ENCODE measurements at regions of chr3 and their contacts with region 1.

Region 1: GRCh38 chr3:192802957-192803899 is 75.9 kb upstream of the FGF12 start:
- DNase-seq: peak in 2 of 4 experiments; percentile 31 to 34
- ATAC-seq: peak; percentile 71
- H3K4me3 ChIP-seq: no peak overlapping the region
- H3K27ac ChIP-seq: no peak overlapping the region
- H3K4me1 ChIP-seq: no peaks in the 10 kb centered on the region
- H3K27me3 ChIP-seq: no peaks in the 10 kb centered on the region
- CTCF ChIP-seq: peak; percentile 12 to 53 (median 48); a peak in 3 of 6 replicates
- EP300 ChIP-seq: no peak
- POLR2A ChIP-seq: no peak
- RAD21 ChIP-seq: peak; percentile 42 to 64; a peak in 3 of 4 replicates

Region 2: DNA sequence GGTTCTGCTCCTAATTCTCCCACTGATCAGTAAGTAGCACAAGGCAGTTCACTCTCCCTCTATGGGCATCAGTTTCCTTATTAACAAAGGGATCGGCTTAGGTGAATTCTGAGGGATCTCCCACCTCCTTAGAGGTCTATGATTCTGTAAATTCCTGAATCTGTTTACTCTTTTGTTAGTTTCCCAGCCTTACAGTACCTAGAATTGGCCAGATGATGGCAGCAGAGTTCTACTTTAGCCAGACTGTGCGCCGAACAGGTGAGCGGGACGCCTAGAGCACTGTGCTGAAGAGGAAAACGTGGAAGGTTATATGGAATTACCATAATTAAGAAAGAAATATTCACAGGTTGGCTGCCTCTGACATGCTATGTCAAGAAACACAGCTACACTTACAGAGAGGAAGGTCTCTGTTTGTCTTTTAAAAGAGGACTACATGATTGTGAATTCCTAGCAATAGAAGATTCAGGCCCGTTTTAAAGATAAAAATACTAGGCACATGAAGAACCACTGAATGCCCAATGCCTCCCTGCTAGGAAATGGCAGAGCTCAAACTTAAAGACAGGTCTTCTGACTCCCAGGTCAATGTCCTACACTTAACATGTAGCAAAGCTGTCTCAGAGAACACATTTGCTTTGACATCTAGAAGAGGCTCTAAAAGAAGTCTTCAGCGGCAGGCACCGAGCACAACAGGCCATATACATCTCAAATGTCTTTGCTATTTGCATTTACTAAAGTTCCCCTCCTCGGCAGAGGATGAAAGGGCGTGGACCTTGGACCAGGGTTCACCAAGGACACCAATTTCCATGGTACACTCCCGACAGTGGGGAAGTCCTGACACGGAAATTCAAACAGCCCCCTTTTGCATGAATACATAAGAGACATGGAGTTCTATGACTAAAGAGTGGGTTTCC is 335.7 kb before region 1 on chr3:
- CTCF ChIA-PET with region 1: interaction called, 8 read pairs
- POLR2A ChIA-PET with region 1: no interaction called
- in situ Hi-C with region 1: no loop called
- intact Hi-C with region 1: loop called (anchors 1 kb)
- DNase-seq: peak; percentile 48 to 65 (median 60)
- ATAC-seq: peak; percentile 93
- H3K4me3 ChIP-seq: no peak overlapping the region
- H3K27ac ChIP-seq: no peak overlapping the region
- H3K4me1 ChIP-seq: no peaks in the 10 kb centered on the region
- H3K27me3 ChIP-seq: no peaks in the 10 kb centered on the region
- CTCF ChIP-seq: peak; percentile 59 to 83 (median 78)
- EP300 ChIP-seq: no peak
- POLR2A ChIP-seq: no peak
- RAD21 ChIP-seq: peak; percentile 67 to 75

Region 3: GRCh38 chr3:192566706-192567290 is 236.4 kb before region 1 on chr3:
- CTCF ChIA-PET with region 1: interaction called, 6 read pairs
- POLR2A ChIA-PET with region 1: no interaction called
- in situ Hi-C with region 1: loop called (anchors 10 kb)
- intact Hi-C with region 1: loop called (anchors 1 kb)
- DNase-seq: peak; percentile 38 to 65 (median 53)
- ATAC-seq: peak; percentile 88
- H3K4me3 ChIP-seq: no peak overlapping the region
- H3K27ac ChIP-seq: no peak overlapping the region
- H3K4me1 ChIP-seq: no peaks in the 10 kb centered on the region
- H3K27me3 ChIP-seq: no peaks in the 10 kb centered on the region
- CTCF ChIP-seq: peak; percentile 37 to 80 (median 79); a peak in 5 of 6 replicates
- EP300 ChIP-seq: no peak
- POLR2A ChIP-seq: no peak
- RAD21 ChIP-seq: peak; percentile 75 to 90

Region 4: DNA sequence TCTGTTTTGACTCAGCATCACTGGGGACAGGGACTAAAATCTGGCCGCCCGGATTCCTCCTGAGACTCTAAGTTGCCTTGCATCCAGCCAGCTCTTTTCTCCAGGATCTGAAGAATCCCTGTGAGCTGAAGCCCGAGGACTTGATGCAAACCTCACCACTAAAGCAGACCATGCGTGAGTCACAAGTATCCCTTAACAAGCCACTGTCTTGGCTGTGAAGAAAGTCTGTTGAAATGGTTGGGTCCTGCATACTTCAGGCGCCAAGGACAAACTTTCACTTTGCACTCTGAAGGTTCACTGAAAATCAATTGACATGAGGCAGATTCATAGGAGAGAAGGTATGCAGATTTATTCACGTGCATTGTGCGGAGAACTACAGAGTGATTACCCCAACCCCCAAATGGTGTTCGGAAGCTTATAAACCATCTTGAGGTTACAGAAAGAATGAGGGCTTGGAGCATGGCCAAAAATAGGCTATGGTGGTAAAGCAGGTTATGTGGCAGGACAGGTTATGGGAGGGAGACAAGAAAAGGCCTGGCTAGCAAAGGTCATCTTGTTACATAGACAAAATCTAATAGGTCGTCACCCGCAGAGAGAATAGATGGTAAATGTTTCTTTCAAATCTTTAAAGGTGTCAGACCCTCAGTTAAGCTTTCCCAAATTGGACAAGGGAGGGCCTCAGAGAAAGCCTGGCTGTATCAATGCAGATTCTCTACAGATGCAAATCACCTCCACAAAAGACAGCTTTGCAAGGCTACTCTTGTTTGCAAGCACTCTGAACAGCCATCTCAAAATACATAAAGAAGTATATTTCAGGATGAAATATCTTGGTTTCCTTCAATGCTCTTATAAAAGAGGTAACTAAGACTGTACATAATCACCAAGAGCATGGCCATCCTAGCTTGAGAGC is 311.5 kb after region 1 on chr3:
- CTCF ChIA-PET with region 1: no interaction called
- POLR2A ChIA-PET with region 1: no interaction called
- in situ Hi-C with region 1: no loop called
- intact Hi-C with region 1: no loop called
- DNase-seq: no peak
- ATAC-seq: no peak
- H3K4me3 ChIP-seq: no peak overlapping the region
- H3K27ac ChIP-seq: no peak overlapping the region
- H3K4me1 ChIP-seq: no peaks in the 10 kb centered on the region
- H3K27me3 ChIP-seq: no peaks in the 10 kb centered on the region
- CTCF ChIP-seq: no peak
- EP300 ChIP-seq: no peak
- POLR2A ChIP-seq: no peak
- RAD21 ChIP-seq: no peak

Region 5: DNA sequence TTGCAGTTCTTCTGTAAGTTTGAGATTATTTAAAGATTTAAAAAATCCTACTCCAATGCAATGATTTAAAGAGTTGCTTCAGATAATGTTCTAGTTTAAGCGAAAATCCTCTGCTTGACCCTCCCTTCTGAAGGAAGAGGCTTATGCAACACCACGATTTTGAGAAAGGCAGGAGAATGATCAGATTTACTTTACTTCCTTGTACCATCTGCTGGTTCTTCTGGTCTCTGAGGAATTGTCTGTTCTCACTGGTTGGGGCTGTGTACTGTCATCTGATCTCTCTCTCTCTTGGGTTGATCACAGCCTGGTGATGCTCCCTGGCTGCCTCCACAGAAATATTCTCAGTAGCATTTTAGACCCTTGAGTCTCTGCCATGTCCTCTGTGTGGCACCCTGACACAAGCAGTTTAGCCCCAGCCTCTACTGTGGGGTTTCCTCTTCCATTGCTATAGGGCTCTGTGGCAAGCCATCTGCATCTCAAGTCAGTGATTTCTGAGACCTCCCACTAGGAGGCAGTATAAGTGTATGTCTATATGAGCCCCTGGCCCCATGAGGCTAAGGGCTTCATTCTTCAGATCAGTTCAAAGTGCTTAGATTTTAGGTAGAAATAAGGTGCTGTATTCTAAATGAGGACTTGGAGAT is 387.0 kb after region 1 on chr3:
- CTCF ChIA-PET with region 1: no interaction called
- POLR2A ChIA-PET with region 1: no interaction called
- in situ Hi-C with region 1: no loop called
- intact Hi-C with region 1: no loop called
- DNase-seq: peak in 3 of 4 experiments; percentile 12 to 24 (median 19)
- ATAC-seq: peak; percentile 65
- H3K4me3 ChIP-seq: no peak overlapping the region
- H3K27ac ChIP-seq: no peak overlapping the region
- H3K4me1 ChIP-seq: no peaks in the 10 kb centered on the region
- H3K27me3 ChIP-seq: no peaks in the 10 kb centered on the region
- CTCF ChIP-seq: peak in 2 of 3 experiments; percentile 34 to 41; a peak in 3 of 6 replicates
- EP300 ChIP-seq: no peak
- POLR2A ChIP-seq: no peak
- RAD21 ChIP-seq: peak in 1 of 2 experiments; percentile 30; a peak in 1 of 4 replicates